ENCODE measurements at regions of chr17 and their contacts with region 1.

Region 1: GRCh38 chr17:83051395-83052233 is 27.8 kb upstream of the METRNL start:
- DNase-seq: peak; percentile 97
- H3K4me3 Mint-ChIP-seq: peak overlapping the region; percentile 86
- H3K27ac Mint-ChIP-seq: peak overlapping the region; percentile 63
- H3K4me1 Mint-ChIP-seq: peaks cover 32% of the 10 kb centered on the region
- H3K27me3 Mint-ChIP-seq: no peaks in the 10 kb centered on the region

Region 2: DNA sequence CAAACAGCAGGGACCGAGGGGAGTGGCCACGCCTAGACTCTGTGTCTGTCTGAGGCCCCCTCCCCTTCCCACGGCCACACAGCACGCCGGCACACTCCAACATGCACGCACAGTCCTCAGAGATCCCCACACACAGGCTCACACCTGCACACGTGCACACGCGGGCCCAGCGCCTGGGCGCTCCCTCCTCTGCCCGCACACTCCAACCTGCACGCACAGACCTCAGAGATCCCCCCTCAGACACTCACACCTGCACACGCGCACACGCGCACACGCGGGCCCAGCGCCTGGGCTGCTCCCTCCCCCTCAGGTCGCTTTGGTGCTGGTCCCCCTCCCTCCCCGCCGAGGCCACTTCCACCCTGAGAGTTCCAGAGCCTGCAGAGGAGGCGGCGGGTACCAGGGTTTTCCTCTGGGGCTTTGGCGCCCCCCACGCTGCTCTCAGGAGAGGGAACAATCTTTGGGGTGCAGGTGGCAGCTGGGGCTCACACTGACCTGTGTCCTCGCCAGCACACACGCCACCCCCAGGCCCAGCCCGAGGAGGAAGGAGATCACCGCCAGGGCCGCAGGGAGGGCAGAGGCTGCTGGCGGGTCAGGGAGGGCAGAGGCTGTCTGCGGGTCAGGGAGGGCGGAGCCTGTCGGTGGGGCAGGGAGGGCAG is 735.8 kb before region 1 on chr17:
- CTCF ChIA-PET with region 1: no interaction called
- intact Hi-C with region 1: loop called (anchors 10 kb)
- DNase-seq: peak; percentile 66
- H3K4me3 Mint-ChIP-seq: no peak overlapping the region
- H3K27ac Mint-ChIP-seq: no peak overlapping the region
- H3K4me1 Mint-ChIP-seq: peaks cover 18% of the 10 kb centered on the region
- H3K27me3 Mint-ChIP-seq: no peaks in the 10 kb centered on the region

Region 3: DNA sequence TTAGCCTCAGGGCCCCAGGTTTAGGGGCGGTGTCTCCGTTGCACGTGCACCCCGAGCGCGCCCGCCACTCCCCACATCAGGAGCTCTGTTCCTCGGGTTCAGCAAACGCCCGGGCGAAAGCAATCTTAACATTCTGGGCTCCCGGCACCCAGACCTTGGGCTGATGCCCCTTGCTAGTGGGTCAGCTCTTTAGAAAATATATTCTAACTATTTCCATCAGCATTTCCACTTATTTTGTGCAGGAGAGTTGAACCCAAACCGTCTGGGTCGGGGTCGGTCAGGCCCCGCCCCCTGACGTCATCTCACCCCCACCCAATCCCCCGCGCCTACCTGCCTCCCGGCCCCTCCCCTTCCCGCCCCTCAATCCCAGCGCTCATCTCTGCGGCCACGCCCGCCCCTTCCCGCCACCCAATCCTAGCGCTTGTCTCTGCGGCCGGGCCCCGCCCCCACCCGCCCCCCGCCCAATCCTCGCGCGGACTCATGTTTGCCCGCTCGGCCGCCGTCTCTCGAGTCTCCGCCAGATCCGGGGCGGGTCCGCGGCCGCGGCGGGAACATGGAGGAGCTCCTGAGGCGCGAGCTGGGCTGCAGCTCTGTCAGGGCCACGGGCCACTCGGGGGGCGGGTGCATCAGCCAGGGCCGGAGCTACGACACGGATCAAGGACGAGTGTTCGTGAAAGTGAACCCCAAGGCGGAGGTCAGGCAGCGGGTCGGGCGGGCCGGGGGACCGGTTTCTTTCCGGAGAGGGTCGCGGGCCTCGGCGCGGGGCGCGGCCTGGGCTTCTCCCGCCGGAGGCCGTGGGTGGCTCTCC is 335.2 kb before region 1 on chr17 and contains the start of gene FN3KRP:
- CTCF ChIA-PET with region 1: no interaction called
- intact Hi-C with region 1: loop called (anchors 5 kb)
- DNase-seq: peak; percentile 90
- H3K4me3 Mint-ChIP-seq: peak within 1 kb of the TSS; percentile 88
- H3K27ac Mint-ChIP-seq: peak within 1 kb of the TSS; percentile 77
- H3K4me1 Mint-ChIP-seq: peaks cover 13% of the 10 kb centered on the region
- H3K27me3 Mint-ChIP-seq: no peaks in the 10 kb centered on the region
- total RNA-seq, gene FN3KRP: 30.0 to 31.7 TPM

Region 4: DNA sequence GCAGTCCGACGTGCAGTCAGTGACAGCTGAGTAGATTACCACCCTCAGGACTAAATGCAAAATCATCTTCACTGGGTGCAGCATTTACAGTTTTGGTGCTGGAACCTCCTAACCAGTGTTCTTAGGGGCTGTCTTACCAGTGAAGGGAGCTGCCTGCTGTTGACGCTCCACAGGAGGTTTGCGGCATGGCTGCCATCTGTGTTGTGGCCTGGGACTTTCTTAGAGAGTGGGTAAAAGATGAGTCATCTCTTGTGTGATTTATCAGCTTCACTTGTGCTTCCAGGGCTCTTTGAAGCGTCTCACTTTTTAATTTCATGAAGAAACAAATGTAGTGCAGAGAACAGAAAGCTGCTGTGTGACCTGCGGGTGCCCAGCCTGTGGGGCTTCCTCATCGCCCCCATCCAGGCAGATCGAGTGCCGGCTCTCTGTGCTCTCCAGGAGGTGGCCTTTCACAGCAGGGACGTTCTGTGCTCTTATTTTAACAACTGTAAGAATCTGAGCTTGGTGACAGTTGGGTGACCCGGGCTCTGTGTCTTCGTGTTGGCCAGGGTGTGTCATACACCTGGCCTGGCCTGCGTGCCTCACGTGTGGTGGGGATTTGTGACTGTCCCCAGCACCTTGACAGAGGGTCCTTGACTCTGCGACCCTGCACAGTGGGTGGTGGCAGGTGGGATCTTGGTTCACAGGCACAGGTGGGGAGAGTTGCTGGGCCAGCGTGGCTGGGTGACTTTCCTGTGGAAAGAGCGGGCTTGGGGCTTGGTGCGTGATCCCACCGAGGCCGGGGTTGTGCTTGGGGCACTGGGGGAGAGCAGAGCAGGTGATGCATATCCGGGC is 187.5 kb before region 1 on chr17:
- CTCF ChIA-PET with region 1: no interaction called
- intact Hi-C with region 1: loop called (anchors 5 kb)
- DNase-seq: peak; percentile 95
- H3K4me3 Mint-ChIP-seq: peak overlapping the region; percentile 57
- H3K27ac Mint-ChIP-seq: peak overlapping the region; percentile 93
- H3K4me1 Mint-ChIP-seq: peaks cover 74% of the 10 kb centered on the region
- H3K27me3 Mint-ChIP-seq: no peaks in the 10 kb centered on the region

Region 5: GRCh38 chr17:82881900-82882714 is 169.5 kb before region 1 on chr17:
- CTCF ChIA-PET with region 1: no interaction called
- intact Hi-C with region 1: loop called (anchors 5 kb)
- DNase-seq: no peak
- H3K4me3 Mint-ChIP-seq: peak overlapping the region; percentile 70
- H3K27ac Mint-ChIP-seq: peak overlapping the region; percentile 89
- H3K4me1 Mint-ChIP-seq: peaks cover 75% of the 10 kb centered on the region
- H3K27me3 Mint-ChIP-seq: no peaks in the 10 kb centered on the region

Region 6: GRCh38 chr17:82974136-82974952 is 77.3 kb before region 1 on chr17:
- CTCF ChIA-PET with region 1: no interaction called
- intact Hi-C with region 1: no loop called
- DNase-seq: no peak
- H3K4me3 Mint-ChIP-seq: no peak overlapping the region
- H3K27ac Mint-ChIP-seq: no peak overlapping the region
- H3K4me1 Mint-ChIP-seq: peaks cover 16% of the 10 kb centered on the region
- H3K27me3 Mint-ChIP-seq: no peaks in the 10 kb centered on the region

Region 7: GRCh38 chr17:82985973-82986372 is 65.6 kb before region 1 on chr17:
- CTCF ChIA-PET with region 1: no interaction called
- intact Hi-C with region 1: loop called (anchors 2 kb)
- DNase-seq: peak; percentile 64
- H3K4me3 Mint-ChIP-seq: peak overlapping the region; percentile 45
- H3K27ac Mint-ChIP-seq: no peak overlapping the region
- H3K4me1 Mint-ChIP-seq: peaks cover 22% of the 10 kb centered on the region
- H3K27me3 Mint-ChIP-seq: no peaks in the 10 kb centered on the region

Region 8: GRCh38 chr17:83002118-83002805 is 49.4 kb before region 1 on chr17:
- CTCF ChIA-PET with region 1: no interaction called
- intact Hi-C with region 1: no loop called
- DNase-seq: no peak
- H3K4me3 Mint-ChIP-seq: no peak overlapping the region
- H3K27ac Mint-ChIP-seq: no peak overlapping the region
- H3K4me1 Mint-ChIP-seq: no peaks in the 10 kb centered on the region
- H3K27me3 Mint-ChIP-seq: no peaks in the 10 kb centered on the region

Region 9: GRCh38 chr17:83079352-83079747 is 27.7 kb after region 1 on chr17 and contains the start of gene METRNL:
- CTCF ChIA-PET with region 1: no interaction called
- intact Hi-C with region 1: loop called (anchors 2 kb)
- DNase-seq: peak; percentile 54
- H3K4me3 Mint-ChIP-seq: peak within 1 kb of the TSS; percentile 38
- H3K27ac Mint-ChIP-seq: no peak within 1 kb of the TSS
- H3K4me1 Mint-ChIP-seq: peaks cover 19% of the 10 kb centered on the region
- H3K27me3 Mint-ChIP-seq: peaks cover 15% of the 10 kb centered on the region
- total RNA-seq, gene METRNL: 14.4 to 15.2 TPM